Activated T-helper 2 cell treated with anti-CD3 and anti-CD28 coated beads, Interferon-gamma antibody, Interleukin-2, Interleukin-4, amounts not matched to agents 10 μg/mL and 5 μg/mL and 100 μg/mL, durations not matched to agents 14 hours and 24 hours and 36 hours (primary cell): ENCODE measurements at regions of chr9 and their contacts with region 1.

Region 1: DNA sequence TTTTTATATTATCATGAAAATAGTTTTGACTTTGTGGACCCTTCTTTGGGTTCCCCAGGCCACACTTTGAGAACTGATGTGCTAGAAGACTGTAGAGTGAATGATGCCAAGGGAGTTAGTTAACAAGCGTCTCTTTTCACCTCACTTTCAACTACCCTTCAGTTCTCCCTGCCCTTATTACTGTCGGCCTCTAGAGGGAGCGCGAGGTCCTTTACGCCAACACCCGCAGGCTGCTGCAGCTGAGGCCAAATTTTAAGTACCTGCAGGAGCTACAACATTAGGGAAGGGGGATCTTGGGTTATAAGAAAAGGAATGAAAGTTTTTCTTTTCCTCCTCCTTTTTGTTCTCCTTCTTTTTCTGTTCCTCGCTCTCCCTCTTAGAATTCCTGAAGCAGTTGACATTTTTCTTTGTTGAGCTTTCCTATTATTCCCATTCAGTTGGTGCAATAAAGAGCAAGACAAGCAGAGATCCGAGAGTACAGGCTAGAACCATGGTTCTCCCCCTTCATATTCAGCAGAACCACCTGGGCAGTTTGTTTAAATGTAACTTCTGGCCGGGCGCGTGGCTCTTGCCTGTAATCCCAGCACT is 84.0 kb downstream of the ZFAND5 start:
- DNase-seq: peak; percentile 46
- H3K4me3 Mint-ChIP-seq: no peak overlapping the region
- H3K27ac Mint-ChIP-seq: no peak overlapping the region
- H3K4me1 Mint-ChIP-seq: no peaks in the 10 kb centered on the region
- H3K27me3 Mint-ChIP-seq: no peaks in the 10 kb centered on the region

Region 2: GRCh38 chr9:72154468-72155281 is 126.3 kb before region 1 on chr9:
- intact Hi-C with region 1: no loop called
- DNase-seq: no peak
- H3K4me3 Mint-ChIP-seq: no peak overlapping the region
- H3K27ac Mint-ChIP-seq: no peak overlapping the region
- H3K4me1 Mint-ChIP-seq: no peaks in the 10 kb centered on the region
- H3K27me3 Mint-ChIP-seq: peaks cover 11% of the 10 kb centered on the region

Region 3: DNA sequence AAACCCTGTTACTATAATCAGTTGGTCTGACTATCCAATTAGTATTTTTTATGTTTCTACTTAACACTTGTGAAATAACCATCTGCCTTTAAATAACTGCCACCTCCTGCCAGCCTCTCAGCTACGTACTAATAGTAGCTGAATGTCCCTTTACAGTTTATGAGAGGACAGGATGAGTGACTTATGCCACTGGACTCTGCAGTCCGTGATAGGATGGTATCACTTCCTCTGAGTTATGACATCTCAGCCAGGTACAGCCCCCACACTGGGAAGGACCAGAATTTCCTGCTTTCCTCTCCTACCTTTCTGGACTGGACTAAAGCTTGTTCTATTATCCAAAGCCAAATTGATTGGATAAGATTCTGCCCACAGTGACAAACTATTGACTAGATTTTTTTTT is 18.9 kb before region 1 on chr9:
- intact Hi-C with region 1: no loop called
- DNase-seq: no peak
- H3K4me3 Mint-ChIP-seq: no peak overlapping the region
- H3K27ac Mint-ChIP-seq: no peak overlapping the region
- H3K4me1 Mint-ChIP-seq: no peaks in the 10 kb centered on the region
- H3K27me3 Mint-ChIP-seq: peaks cover 4% of the 10 kb centered on the region

Region 4: DNA sequence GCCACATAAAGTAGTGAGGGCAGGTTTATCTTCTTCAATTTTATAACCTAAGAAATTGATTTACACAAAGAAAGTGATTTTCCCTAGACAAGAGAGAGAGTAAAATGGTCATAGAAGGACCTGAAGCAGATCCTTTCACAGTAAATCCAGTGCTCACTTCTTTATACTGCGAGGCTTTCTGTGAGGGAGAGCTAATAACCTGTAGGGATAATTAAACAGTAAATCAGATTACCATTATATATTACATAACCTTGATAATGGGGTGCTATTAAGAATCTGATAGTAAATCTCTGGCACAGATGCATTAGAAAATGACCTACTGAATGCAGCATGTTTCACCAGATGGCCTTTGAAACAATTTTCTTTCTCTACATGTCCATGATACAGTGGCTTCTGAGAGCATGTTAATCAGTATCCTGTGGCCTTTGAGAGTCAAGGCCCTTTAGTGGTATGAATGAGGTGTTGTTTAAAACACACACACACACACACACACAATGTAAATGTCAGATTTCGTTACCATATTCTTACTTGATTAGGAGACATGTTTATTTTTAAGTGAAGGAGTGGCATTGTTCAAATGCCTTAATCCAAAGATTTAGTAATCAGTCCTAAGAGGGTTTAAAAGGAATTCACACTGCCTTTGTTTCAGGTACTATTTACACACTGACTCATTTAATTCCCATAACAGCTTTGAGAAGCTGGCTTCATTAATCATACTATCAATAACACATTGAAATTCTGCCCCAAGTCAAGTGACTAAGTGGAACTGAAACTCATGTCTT is 547.1 kb after region 1 on chr9:
- intact Hi-C with region 1: loop called (anchors 2 kb)
- DNase-seq: no peak
- H3K4me3 Mint-ChIP-seq: no peak overlapping the region
- H3K27ac Mint-ChIP-seq: no peak overlapping the region
- H3K4me1 Mint-ChIP-seq: no peaks in the 10 kb centered on the region
- H3K27me3 Mint-ChIP-seq: peaks cover 3% of the 10 kb centered on the region

Region 5: GRCh38 chr9:73023025-73023541 is 742.1 kb after region 1 on chr9:
- intact Hi-C with region 1: loop called (anchors 1 kb)
- DNase-seq: peak; percentile 10
- H3K4me3 Mint-ChIP-seq: no peak overlapping the region
- H3K27ac Mint-ChIP-seq: no peak overlapping the region
- H3K4me1 Mint-ChIP-seq: peaks cover 9% of the 10 kb centered on the region
- H3K27me3 Mint-ChIP-seq: peaks cover 15% of the 10 kb centered on the region

Region 6: DNA sequence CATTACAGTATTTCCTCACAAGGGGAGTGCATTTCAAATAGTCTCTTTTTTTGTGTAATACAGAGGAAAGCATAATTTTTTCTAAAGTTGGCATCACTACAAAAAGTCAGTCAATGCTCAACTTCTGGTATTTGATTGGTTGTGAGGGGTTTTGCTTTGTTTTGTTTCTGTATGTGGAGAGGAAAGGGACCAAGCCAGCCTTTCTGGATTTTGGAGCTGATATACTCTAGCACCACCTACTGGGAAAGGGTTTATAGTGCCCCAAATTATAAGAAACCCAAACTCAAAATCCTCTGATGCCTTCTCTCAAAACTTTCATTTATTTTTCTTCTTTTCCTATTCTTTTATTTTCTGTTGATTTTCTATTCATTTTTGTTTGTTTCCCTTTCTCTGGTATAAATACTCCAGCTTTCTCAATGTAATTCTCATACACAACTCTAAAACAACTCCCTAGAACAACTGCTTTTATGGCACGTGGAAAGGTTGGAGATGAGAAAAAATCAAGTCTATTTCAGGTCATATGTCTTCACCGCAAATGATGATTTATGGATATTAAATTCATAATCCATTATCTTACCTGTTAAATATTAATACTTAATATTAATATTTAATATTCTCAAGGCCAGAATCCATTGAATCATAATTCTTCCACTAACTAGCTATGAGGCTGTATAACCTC is 801.1 kb after region 1 on chr9:
- intact Hi-C with region 1: loop called (anchors 10 kb)
- DNase-seq: no peak
- H3K4me3 Mint-ChIP-seq: no peak overlapping the region
- H3K27ac Mint-ChIP-seq: no peak overlapping the region
- H3K4me1 Mint-ChIP-seq: no peaks in the 10 kb centered on the region
- H3K27me3 Mint-ChIP-seq: peaks cover 16% of the 10 kb centered on the region